Activated naive CD4-positive, alpha-beta T cell treated with anti-CD3 and anti-CD28 coated beads for 36 hours (primary cell): ENCODE measurements at regions of chr1 and their contacts with region 1.

Region 1: GRCh38 chr1:54645806-54646676 is 4.5 kb downstream of the MROH7 start:
- DNase-seq: no peak
- H3K4me3 Mint-ChIP-seq: no peak overlapping the region
- H3K27ac Mint-ChIP-seq: no peak overlapping the region
- H3K4me1 Mint-ChIP-seq: no peaks in the 10 kb centered on the region
- H3K27me3 Mint-ChIP-seq: no peaks in the 10 kb centered on the region

Region 2: DNA sequence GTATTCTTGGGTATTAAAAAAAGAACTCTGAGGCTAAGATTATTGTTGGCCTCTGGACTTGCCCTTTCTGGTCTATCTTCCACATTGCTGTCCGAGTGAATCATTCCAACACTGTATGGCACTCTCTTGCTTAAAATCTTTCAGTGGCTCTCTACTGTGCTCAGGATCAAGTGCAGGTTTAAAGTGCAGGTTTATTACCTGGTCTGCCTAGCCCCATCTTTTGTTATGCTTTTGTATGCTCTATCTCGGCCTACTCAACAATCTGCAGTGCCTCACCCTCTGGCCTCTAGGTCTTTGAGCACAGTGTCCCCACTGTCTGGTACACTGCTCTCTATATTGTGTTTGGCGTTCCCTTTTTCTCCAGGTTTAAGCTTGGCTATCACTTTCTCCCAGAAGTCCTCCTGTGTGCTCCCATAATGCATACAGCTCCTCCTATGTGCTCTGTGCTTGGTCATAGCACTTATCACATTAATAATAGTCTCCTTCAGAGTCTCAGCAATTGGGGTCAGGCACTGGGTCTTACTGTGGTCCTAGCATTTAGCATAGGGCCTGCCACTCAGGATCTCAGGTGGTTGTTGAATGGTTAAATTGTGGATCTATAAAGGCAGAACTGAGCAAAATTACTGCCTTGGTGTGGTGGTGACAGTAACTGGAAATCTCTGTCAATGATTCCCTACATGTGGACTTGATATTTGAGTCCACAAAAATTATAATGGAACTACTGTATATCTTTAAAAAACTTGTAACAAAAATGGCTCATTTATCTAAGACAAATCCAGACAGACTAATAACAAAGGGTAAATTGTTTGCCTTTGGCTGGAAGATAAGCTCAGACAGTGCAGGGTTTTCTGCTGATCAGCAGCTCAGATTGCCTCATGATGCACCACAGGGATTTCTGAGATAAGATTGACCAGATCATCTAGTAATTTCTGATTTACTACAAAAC is 617.5 kb before region 1 on chr1:
- CTCF ChIA-PET with region 1: no interaction called
- intact Hi-C with region 1: no loop called
- DNase-seq: no peak
- H3K4me3 Mint-ChIP-seq: no peak overlapping the region
- H3K27ac Mint-ChIP-seq: no peak overlapping the region
- H3K4me1 Mint-ChIP-seq: no peaks in the 10 kb centered on the region
- H3K27me3 Mint-ChIP-seq: no peaks in the 10 kb centered on the region

Region 3: GRCh38 chr1:54499360-54500106 is 146.5 kb before region 1 on chr1:
- CTCF ChIA-PET with region 1: no interaction called
- intact Hi-C with region 1: loop called (anchors 10 kb)
- DNase-seq: peak; percentile 60
- H3K4me3 Mint-ChIP-seq: peak overlapping the region; percentile 63
- H3K27ac Mint-ChIP-seq: no peak overlapping the region
- H3K4me1 Mint-ChIP-seq: peaks cover 8% of the 10 kb centered on the region
- H3K27me3 Mint-ChIP-seq: peaks cover 13% of the 10 kb centered on the region